CD4-positive, alpha-beta memory T cell (primary cell): ENCODE measurements at regions of chr2 and their contacts with region 1.

Region 1: GRCh38 chr2:136384531-136385303 is 266.8 kb upstream of the CXCR4 start:
- DNase-seq: peak; percentile 69 to 70 (median 70)
- H3K4me3 ChIP-seq: no peak overlapping the region
- H3K4me3 Mint-ChIP-seq: peak overlapping the region in 3 of 8 donors; percentile 3 to 54 (median 47)
- H3K27ac ChIP-seq: no peak overlapping the region
- H3K27ac Mint-ChIP-seq: peak overlapping the region; percentile 72 to 97 (median 89)
- H3K4me1 ChIP-seq: peaks cover 33% of the 10 kb centered on the region
- H3K4me1 Mint-ChIP-seq: peaks cover 34 to 38% (median 37%) of the 10 kb centered on the region in 4 donors
- H3K27me3 ChIP-seq: no peaks in the 10 kb centered on the region
- H3K27me3 Mint-ChIP-seq: no peaks in the 10 kb centered on the region

Region 2: GRCh38 chr2:135741395-135742324 is 643.1 kb before region 1 on chr2 and contains the start of gene UBXN4:
- CTCF ChIA-PET with region 1: interaction called, 4 read pairs
- POLR2A ChIA-PET with region 1: interaction called, 4 read pairs
- intact Hi-C with region 1: loop called (anchors 10 kb)
- DNase-seq: peak; percentile 88 to 97 (median 91)
- H3K4me3 ChIP-seq: peak within 1 kb of the TSS; percentile 53 to 80
- H3K4me3 Mint-ChIP-seq: peak within 1 kb of the TSS; percentile 94 to 99 (median 97)
- H3K27ac ChIP-seq: peak within 1 kb of the TSS; percentile 97
- H3K27ac Mint-ChIP-seq: peak within 1 kb of the TSS in 6 of 7 donors; percentile 96 to 99 (median 97)
- H3K4me1 ChIP-seq: peaks cover 40% of the 10 kb centered on the region
- H3K4me1 Mint-ChIP-seq: peaks cover 29 to 43% (median 37%) of the 10 kb centered on the region in 4 donors
- H3K27me3 ChIP-seq: no peaks in the 10 kb centered on the region
- H3K27me3 Mint-ChIP-seq: no peaks in the 10 kb centered on the region
- total RNA-seq, gene UBXN4: 116 to 121 TPM

Region 3: GRCh38 chr2:135904341-135904989 is 480.3 kb before region 1 on chr2:
- CTCF ChIA-PET with region 1: interaction called, 12 read pairs
- POLR2A ChIA-PET with region 1: no interaction called
- intact Hi-C with region 1: no loop called
- DNase-seq: no peak
- H3K4me3 ChIP-seq: no peak overlapping the region
- H3K4me3 Mint-ChIP-seq: no peak overlapping the region
- H3K27ac ChIP-seq: no peak overlapping the region
- H3K27ac Mint-ChIP-seq: peak overlapping the region in 2 of 7 donors; percentile 29 to 54
- H3K4me1 ChIP-seq: no peaks in the 10 kb centered on the region
- H3K4me1 Mint-ChIP-seq: no peaks in the 10 kb centered on the region
- H3K27me3 ChIP-seq: no peaks in the 10 kb centered on the region
- H3K27me3 Mint-ChIP-seq: no peaks in the 10 kb centered on the region

Region 4: DNA sequence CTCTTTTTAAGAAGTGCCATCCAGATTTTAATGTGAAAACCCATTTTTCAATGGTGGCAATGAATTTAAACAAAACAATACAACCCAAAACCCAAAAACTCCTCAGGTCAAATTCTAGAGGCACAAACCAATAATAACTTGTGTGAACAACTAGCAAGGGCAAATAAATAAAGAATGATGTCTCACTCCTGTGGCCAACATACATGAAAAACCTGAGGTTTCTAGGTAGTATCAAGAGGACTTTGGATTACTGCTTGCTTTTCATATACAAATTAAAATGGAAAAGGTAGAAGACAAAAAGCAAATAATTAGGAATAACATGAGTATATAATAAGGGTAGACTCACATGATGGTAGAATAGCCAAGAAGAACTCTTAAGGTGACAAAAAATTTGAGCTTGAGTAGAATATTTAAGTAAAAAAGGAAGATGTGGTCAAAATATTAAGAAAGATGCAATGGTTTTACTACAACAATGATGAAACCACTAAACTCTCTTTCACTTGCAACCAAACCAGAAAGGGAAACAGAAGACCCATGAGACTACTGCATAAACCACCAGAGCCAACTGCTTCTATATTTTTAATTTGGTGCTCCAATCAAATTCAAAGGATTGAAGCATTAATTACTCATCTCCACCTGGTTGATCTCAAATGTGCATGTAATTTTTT is 452.8 kb before region 1 on chr2:
- CTCF ChIA-PET with region 1: interaction called, 12 read pairs
- POLR2A ChIA-PET with region 1: no interaction called
- intact Hi-C with region 1: no loop called
- DNase-seq: no peak
- H3K4me3 ChIP-seq: no peak overlapping the region
- H3K4me3 Mint-ChIP-seq: no peak overlapping the region
- H3K27ac ChIP-seq: no peak overlapping the region
- H3K27ac Mint-ChIP-seq: peak overlapping the region in 1 of 7 donors; percentile 46
- H3K4me1 ChIP-seq: no peaks in the 10 kb centered on the region
- H3K4me1 Mint-ChIP-seq: peaks cover 4 to 10% (median 8%) of the 10 kb centered on the region in 4 donors
- H3K27me3 ChIP-seq: no peaks in the 10 kb centered on the region
- H3K27me3 Mint-ChIP-seq: no peaks in the 10 kb centered on the region

Region 5: DNA sequence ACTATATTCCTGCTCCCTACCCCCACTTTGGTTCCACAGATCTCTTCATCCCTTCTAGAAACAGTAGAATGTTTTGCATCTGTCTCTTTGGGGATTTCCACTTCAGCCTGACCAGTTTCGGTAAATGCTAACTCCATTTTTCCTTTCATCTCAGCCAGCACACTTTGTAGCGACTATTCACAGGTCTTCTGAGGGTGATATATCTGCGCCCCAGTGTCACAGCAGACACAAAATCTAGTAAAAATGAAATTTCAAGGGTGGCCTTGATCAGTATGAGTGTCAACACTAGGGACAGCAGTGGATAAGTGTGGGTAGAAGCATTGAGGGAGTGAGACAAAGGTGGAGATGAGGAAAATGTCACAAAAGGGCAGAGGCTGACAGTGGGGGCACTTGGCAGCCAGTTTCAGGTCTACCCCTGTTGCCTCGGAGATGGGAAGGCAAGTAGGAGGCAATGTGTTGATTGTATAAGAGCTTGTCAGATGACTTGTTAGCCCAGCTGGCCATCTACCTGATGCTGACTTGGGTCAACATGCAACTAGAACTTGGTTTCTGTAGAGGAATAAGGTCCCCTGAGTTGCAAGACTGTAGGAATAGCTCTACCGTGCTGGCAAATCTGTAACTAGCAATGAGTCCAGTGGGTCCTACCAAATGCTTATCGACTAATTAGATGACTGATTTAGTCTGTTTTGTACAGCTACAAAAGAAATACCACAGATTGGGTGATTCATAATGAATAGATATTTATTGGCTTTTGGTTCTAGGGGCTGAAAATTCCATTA is 327.5 kb before region 1 on chr2:
- CTCF ChIA-PET with region 1: interaction called, 3 read pairs
- POLR2A ChIA-PET with region 1: no interaction called
- intact Hi-C with region 1: loop called (anchors 5 kb)
- DNase-seq: peak; percentile 17 to 52 (median 37)
- H3K4me3 ChIP-seq: peak overlapping the region in 1 of 2 donors; percentile 6
- H3K4me3 Mint-ChIP-seq: peak overlapping the region in 7 of 8 donors; percentile 60 to 73 (median 69)
- H3K27ac ChIP-seq: peak overlapping the region; percentile 42
- H3K27ac Mint-ChIP-seq: peak overlapping the region; percentile 59 to 92 (median 90)
- H3K4me1 ChIP-seq: peaks cover 71% of the 10 kb centered on the region
- H3K4me1 Mint-ChIP-seq: peaks cover 51 to 80% (median 61%) of the 10 kb centered on the region in 4 donors
- H3K27me3 ChIP-seq: no peaks in the 10 kb centered on the region
- H3K27me3 Mint-ChIP-seq: no peaks in the 10 kb centered on the region